A549 (cell line): ENCODE measurements at regions of chr19 and their contacts with region 1.

Region 1: GRCh38 chr19:38634757-38635482 is 12.5 kb upstream of the ACTN4 start:
- DNase-seq: peak; percentile 80 to 93
- ATAC-seq: peak; percentile 58 to 64; a peak in 5 of 6 replicates
- H3K4me3 ChIP-seq: no peak overlapping the region
- H3K27ac ChIP-seq: peak overlapping the region; percentile 9 to 77; a peak in 3 of 6 replicates
- H3K4me1 ChIP-seq: peaks cover 55% of the 10 kb centered on the region
- CTCF ChIP-seq: peak; percentile 99
- EP300 ChIP-seq: no peak
- POLR2A ChIP-seq: no peak
- RAD21 ChIP-seq: peak; percentile 82 to 88

Region 2: DNA sequence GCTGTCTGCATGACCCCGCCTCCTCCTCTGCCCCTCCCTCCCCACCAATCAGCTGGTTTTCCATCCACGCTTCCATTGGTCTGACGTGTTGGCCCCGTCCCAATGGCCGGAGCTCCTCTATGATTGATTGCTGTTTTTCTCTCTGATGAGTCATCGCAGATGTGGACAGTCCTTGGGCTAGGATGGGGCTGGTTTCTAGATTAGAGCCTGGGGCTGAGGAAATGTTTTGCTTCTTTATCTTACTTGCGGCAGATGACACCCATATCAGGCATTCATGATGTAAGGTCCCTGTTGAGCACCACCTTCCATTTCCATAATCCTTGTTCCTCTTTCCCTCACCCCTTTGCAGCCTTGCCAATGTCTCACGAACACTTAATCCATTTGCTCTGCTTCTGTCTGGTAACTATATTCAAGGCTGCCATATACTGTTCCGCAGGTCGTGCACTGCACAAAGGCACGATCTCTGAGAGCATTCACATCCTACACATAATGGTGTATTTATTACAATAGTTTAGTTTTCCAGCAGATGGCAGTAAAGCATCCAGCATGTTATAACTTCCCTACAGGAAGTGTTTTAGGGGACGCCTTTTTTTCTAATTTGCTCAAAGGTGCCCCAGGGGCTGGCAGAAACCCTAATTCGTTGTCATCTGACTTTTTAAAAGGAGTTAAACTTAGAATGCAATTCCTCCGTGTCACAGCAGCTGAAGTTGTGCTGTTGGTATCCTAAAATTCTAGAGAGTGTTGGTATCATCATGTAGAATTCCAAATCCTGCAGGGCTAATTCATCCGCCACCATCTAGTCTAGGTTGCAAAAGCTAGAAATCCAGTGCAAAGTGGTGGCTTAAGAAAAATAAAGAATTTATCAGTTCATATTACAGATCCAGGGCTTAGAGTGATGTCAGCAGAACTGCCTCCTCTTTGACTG is 90.6 kb before region 1 on chr19:
- CTCF ChIA-PET with region 1: interaction called, 149 read pairs
- POLR2A ChIA-PET with region 1: interaction called, 17 read pairs
- DNase-seq: peak; percentile 96 to 98
- ATAC-seq: peak; percentile 89 to 93
- H3K4me3 ChIP-seq: peak overlapping the region; percentile 37
- H3K27ac ChIP-seq: peak overlapping the region; percentile 59 to 69
- H3K4me1 ChIP-seq: peaks cover 14% of the 10 kb centered on the region
- CTCF ChIP-seq: peak; percentile 100
- EP300 ChIP-seq: no peak
- POLR2A ChIP-seq: no peak
- RAD21 ChIP-seq: peak; percentile 99

Region 3: DNA sequence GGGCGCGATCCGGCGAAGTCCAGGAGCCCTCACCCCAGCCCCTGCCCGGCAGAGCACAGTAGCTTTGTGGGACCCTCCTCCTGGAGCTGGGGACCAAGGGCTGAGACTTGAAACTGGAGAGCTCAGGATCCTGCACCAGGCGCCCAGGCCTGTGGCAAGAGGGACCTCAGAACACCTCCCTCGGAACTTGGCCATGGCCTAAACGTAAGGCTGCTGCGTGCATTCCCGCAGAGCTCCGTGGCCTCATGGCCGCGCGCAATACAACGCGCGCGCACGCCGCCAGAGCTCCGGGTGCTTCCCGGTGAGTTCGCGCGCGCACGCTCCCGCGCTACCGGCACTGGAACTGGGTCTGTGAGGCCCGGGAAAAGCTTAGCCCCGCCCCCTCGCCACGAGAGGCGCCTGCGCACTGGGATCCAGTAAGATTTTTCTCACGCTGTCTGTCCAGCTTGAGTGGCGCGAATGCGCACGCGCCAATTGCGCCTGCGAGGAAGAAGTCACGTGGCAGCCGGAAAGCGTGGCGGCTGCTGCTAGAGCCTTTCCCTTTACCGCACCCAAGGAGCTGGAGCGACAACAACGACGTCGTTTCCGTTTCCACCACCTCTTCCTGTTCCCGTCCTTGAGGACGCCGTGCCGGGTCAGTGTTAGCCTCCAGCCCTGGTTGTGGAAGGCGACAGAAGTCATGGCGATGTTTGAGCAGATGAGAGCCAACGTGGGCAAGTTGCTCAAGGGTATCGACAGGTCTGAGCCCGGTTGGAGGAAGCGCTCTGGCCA is 16.1 kb before region 1 on chr19 and contains the start of gene EIF3K:
- CTCF ChIA-PET with region 1: interaction called, 134 read pairs
- POLR2A ChIA-PET with region 1: interaction called, 24 read pairs
- DNase-seq: peak; percentile 100
- ATAC-seq: peak; percentile 87 to 93
- H3K4me3 ChIP-seq: peak within 1 kb of the TSS; percentile 86
- H3K27ac ChIP-seq: peak within 1 kb of the TSS; percentile 84 to 87
- H3K4me1 ChIP-seq: peaks cover 14% of the 10 kb centered on the region
- CTCF ChIP-seq: no peak
- EP300 ChIP-seq: no peak
- POLR2A ChIP-seq: peak; percentile 85
- RAD21 ChIP-seq: peak in 1 of 2 experiments; percentile 10; a peak in 1 of 5 replicates
- polyA plus RNA-seq, gene EIF3K: 419 and 491 TPM in 2 replicates

Region 4: GRCh38 chr19:38676023-38676877 is 41.3 kb after region 1 on chr19:
- CTCF ChIA-PET with region 1: interaction called, 68 read pairs
- POLR2A ChIA-PET with region 1: no interaction called
- DNase-seq: no peak
- ATAC-seq: no peak; a peak in 1 of 6 replicates
- H3K4me3 ChIP-seq: no peak overlapping the region
- H3K27ac ChIP-seq: peak overlapping the region; percentile 8 to 93; a peak in 5 of 6 replicates
- H3K4me1 ChIP-seq: peaks cover 90% of the 10 kb centered on the region
- CTCF ChIP-seq: no peak
- EP300 ChIP-seq: no peak
- POLR2A ChIP-seq: no peak
- RAD21 ChIP-seq: no peak

Region 5: GRCh38 chr19:38718747-38719543 is 84.0 kb after region 1 on chr19:
- CTCF ChIA-PET with region 1: interaction called, 88 read pairs
- POLR2A ChIA-PET with region 1: interaction called, 3 read pairs
- DNase-seq: peak in 1 of 2 experiments; percentile 61
- ATAC-seq: peak; percentile 30 to 52
- H3K4me3 ChIP-seq: no peak overlapping the region
- H3K27ac ChIP-seq: peak overlapping the region; percentile 32 to 66; a peak in 4 of 6 replicates
- H3K4me1 ChIP-seq: peaks cover 33% of the 10 kb centered on the region
- CTCF ChIP-seq: peak; percentile 38; the same call in 2 of the 3 replicates
- EP300 ChIP-seq: no peak
- POLR2A ChIP-seq: no peak
- RAD21 ChIP-seq: peak; percentile 20 to 35; a peak in 4 of 5 replicates

Region 6: DNA sequence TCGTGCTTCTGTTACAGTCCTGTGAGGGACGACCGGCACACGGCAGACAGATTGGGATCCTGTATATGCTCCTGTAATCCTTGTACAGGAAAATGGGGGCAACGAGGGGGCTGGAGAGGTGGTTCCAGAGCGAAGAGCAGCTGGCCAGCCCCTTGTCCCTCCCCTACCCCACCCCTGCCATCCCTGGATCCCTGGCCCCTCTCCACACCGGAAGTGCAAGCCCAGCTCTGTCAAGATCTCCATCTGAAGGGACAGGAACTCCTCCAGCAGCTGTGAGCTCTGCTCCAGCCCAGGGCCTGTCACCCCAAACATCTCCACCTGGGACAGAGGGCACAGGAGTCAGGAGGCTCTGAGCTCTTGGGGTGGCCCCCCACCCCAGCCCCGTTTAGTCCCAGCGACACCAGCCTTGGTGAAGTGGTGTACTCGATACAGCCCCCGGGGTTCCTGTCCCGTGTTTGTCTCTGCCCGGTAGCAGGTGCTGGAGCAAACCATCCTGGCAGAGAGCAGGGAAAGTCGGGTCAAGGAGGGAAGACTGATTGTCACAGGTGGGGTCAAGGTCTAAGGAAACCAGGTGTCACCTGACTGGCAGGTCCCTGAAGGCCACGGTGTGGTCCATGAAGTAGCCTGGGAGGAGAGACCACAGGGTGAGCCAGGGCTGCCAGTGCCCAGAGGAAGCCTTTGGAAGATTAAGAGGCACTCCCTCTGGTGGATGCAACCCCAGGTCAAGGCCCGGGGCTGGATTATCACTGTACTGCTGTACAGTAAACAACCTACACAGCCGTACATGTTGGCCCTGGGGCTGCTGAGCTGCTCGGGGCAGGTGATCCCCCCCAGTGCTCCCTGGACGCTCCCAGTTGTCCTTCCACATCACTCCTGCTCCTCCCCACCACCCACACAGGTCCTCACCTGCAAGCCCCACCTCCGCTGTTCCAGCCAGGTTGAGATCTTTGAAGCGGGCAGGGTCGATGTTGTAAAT is 282.9 kb after region 1 on chr19:
- CTCF ChIA-PET with region 1: interaction called, 16 read pairs
- POLR2A ChIA-PET with region 1: no interaction called
- DNase-seq: peak; percentile 75 to 90
- ATAC-seq: peak; percentile 72 to 84
- H3K4me3 ChIP-seq: no peak overlapping the region
- H3K27ac ChIP-seq: peak overlapping the region in 1 of 2 experiments; percentile 14; a peak in 1 of 6 replicates
- H3K4me1 ChIP-seq: 0 out of 3 replicates have a peak, but pooled peaks cover 5% of the 10 kb centered on the region
- CTCF ChIP-seq: peak; percentile 49
- EP300 ChIP-seq: no peak
- POLR2A ChIP-seq: no peak
- RAD21 ChIP-seq: peak; percentile 48 to 59